ENCODE measurements at regions of chr17 and their contacts with region 1.

Region 1: GRCh38 chr17:33302394-33302793 is 9.3 kb upstream of the ASIC2 start:
- DNase-seq: no peak
- H3K4me3 ChIP-seq: no peak overlapping the region
- H3K27ac ChIP-seq: no peak overlapping the region
- H3K4me1 ChIP-seq: no peaks in the 10 kb centered on the region
- H3K27me3 ChIP-seq: no peaks in the 10 kb centered on the region
- CTCF ChIP-seq: no peak

Region 2: DNA sequence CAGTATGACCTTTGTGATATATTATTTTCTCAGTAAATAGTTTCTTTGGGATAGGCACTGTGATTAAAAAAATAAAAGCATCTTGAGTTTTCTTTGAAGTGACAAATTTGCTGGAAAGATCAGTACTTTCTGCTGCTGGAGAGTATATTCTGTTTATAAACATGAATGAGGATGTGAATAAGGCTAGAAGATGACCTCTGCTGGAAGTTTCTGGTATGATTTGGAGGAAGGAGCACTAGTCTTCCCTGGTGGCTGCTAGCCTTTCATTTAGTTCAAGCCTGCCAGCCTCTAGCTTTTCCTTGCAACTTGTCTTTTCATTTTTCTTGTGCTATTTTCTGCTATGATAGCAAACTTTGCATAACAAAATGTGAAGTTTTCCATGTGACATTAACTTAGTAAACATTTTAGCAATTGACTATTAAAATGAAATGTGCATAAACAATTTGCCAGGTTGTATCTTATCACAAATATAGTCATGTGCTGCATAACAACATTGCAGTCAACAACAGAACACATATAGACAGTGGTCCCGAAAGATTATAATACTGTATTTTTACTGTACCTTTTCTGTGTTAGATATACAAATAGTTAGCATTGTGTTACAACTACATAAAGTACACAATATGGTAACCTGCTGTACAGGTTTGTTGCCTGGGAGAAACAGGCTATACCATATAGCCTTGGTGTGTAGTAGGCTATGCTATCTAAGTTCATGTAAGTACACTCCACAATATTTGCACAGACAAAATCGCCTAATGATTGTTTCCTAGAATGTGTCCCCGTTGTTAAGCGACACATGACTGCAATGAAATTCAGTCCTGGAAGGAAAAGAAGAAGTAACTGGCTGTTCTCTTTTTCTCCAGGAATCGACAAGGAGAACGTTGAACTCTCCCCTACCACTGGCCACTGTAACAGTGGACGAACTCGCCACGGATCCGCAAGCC is 1929.0 kb before region 1 on chr17:
- intact Hi-C with region 1: loop called (anchors 10 kb)
- DNase-seq: no peak
- H3K4me3 ChIP-seq: no peak overlapping the region
- H3K27ac ChIP-seq: no peak overlapping the region
- H3K4me1 ChIP-seq: no peaks in the 10 kb centered on the region
- H3K27me3 ChIP-seq: no peaks in the 10 kb centered on the region
- CTCF ChIP-seq: peak; percentile 28 to 50